ENCODE measurements at regions of chr10 and their contacts with region 1.

Region 1: DNA sequence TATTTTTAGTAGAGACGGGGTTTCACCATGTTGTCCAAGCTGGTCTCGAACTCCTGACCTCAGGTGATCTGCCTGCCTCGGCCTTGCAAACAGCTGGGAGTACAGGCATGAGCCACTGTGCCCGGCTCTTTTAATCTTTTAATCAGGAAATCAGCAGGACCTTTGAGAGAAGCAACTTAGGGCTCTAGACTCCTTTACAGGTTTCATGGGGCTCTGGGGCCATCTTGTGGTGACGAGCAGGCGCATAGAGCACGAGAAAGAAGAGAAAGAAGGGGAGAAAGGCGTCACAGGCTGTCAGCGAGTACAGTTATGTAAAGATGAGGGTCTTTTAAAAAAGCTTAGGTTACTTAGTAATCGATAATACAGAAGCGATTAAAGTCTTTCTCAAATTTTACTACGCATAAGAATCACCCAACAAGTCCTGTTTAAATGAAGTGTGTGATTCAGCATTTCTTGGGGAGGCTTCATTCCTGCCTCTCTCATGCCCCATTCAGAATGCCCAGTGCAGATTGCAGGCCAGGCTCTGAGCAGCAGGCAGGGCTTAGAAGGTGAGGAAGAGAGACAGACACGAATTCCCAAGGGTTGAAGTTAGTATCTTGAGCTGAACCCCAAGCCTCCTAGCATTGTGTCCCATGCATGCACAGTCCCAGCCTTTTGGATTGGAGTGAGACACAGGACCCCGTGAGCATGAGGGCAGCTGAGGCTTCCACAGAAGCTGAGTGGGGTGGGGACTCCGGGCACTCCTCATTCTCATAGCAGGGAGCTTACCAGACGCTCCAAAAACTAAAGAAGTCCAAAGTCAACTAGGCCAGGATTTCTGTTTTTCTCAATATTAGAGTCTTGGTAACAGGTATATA is 23.6 kb upstream of the PFKP start:
- DNase-seq: peak; percentile 72
- H3K4me3 ChIP-seq: no peak overlapping the region
- H3K27ac ChIP-seq: no peak overlapping the region
- H3K4me1 ChIP-seq: no peaks in the 10 kb centered on the region
- H3K27me3 ChIP-seq: no peaks in the 10 kb centered on the region
- CTCF ChIP-seq: peak; percentile 63

Region 2: DNA sequence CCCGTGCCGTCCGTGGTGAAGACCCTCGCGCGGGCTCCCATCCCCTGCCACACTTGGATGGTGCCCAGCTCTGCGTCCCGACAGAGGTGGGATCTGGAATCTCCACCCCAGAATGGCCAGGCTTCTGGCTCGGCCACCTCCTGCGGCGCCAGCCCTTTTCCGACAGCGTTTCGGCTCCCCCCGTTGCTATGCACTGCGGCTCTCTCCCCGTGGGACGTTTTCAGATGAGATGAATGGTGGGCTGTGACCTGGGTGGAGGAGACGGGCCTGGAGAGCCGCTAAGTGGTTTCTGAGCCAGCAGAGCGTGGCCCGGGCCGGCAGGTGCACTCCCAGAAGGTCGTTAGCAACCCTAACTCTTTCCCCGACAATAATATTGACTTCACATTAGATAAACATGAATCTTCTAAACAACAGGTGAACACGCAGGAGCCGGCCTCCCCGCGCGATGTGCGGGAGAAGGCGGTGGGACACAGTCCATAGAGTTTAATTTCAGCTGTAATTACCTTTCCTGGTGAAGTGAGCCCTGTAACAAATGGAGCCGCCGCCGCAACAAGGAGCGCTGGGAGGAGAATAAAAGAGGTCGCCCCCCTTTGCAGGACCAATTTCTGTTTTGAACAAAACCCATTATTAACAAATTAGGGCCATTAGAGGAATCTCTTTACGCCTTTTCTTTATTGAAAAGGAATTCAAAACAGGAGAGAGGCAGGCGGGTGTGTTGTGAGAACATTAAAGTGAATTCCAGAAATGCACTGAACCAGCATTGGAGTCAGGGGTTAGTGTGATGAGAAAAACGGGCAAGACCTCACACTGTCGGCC is 270.7 kb before region 1 on chr10:
- intact Hi-C with region 1: no loop called
- DNase-seq: no peak
- H3K4me3 ChIP-seq: no peak overlapping the region
- H3K27ac ChIP-seq: no peak overlapping the region
- H3K4me1 ChIP-seq: no peaks in the 10 kb centered on the region
- H3K27me3 ChIP-seq: no peaks in the 10 kb centered on the region
- CTCF ChIP-seq: no peak

Region 3: DNA sequence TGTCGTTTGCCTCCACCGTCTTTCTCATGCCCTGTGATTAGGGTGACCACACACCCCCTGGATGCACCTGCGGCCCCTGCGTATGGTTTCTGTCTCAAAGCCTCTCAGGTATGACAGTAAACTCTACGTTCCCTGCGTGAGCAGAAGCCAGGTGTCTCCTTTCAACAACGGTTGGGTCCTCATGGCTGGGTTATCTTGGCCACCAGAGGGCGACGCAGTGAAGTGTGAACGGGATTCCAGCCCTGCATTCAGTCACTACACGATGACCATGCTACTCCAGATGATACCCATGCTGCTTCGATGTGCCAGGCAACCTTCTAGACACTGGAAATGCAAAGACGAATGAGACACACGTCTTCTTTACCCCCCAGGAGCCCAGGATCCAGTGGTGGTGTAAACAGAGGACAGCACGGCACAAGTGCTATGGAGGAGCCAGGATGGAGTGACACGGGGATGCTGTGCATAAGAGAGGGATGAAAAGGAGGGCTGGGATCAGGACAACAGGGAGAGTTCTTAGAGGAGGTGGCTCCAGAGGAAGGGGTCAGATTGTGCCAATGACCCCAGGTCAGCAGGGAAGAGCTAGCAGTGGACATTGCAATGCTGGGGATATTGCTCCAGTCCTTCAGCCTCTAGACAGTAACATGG is 204.5 kb before region 1 on chr10:
- intact Hi-C with region 1: loop called (anchors 5 kb)
- DNase-seq: peak; percentile 44
- H3K4me3 ChIP-seq: no peak overlapping the region
- H3K27ac ChIP-seq: no peak overlapping the region
- H3K4me1 ChIP-seq: no peaks in the 10 kb centered on the region
- H3K27me3 ChIP-seq: no peaks in the 10 kb centered on the region
- CTCF ChIP-seq: peak; percentile 50

Region 4: DNA sequence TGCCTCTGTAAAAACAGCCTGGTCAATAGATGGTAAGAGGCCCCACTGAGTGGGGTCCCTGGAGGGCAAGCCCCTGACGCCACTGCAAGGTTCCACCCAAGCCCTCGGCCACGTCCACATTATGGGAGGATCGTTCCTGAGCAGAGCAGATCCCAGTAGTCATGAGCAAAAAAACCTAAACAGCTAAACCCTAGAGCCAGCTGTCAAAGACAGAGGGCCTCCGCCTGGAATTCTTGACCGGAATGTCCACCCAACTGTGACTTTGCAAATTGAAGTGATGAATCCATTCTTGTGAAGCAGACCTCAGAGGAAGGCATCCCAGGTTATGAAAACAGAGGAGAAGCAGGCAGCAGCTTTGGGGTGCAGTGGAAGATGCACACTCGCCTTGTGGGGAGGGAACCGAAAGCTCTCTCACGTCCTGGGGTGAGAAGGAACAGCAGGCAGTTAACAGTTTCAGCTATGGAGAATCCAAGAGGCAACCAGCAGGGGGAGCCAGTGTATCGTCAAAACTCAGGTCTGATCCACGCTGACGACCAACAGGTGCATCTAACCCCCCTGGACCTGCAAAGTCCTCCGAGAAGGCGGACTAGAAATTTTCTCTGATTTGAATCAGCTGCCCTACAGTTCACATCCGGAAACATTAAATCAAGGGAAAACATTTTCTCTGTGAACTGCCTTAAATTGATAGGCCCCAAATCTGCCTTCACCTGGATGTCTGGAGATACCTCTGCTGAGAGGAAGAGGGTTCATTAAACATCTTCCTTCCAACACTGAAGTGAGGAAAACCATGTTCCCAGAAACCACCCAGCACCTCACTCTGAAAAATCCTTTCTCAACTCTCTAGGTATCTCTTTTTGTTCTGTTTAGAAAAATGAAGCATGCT is 115.5 kb before region 1 on chr10:
- intact Hi-C with region 1: loop called (anchors 2 kb)
- DNase-seq: peak; percentile 80
- H3K4me3 ChIP-seq: no peak overlapping the region
- H3K27ac ChIP-seq: no peak overlapping the region
- H3K4me1 ChIP-seq: no peaks in the 10 kb centered on the region
- H3K27me3 ChIP-seq: no peaks in the 10 kb centered on the region
- CTCF ChIP-seq: peak; percentile 78

Region 5: DNA sequence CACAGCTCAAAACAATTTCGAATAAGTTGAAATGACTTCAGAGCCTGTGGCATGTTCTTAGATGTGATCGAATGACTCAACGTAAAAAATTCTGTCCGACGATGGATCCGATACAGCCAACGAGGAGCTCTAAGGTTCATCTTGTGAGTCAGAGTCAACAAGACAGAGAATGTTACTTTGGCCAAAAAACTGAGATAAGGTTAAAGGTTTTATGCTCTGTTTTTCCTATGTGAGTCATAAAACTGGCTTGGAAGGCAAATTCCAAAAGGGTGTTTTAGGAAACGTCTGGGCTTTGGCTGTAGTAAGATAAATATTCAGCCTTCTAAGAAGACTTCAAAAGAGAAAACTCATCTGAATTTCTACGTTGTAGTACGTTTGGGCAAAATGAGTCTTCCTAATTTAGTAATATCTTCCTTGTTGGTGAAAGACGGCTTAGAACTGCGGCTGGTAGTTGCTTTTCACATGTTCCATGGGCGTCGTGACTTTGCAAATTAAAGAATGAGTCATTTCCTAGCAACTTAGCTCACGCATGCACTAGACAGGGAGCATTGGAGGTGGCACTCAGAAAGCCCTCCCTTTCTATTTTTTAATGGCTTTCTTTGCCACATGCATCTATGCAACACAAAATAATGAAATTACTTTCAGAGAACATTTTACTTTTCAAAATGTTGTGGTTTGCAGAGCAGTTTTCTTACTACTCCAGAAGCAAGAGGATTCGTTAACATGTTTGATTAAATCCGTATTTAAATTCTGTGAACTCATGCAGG is 51.8 kb after region 1 on chr10:
- intact Hi-C with region 1: no loop called
- DNase-seq: peak; percentile 50
- H3K4me3 ChIP-seq: no peak overlapping the region
- H3K27ac ChIP-seq: peak overlapping the region; percentile 42
- H3K4me1 ChIP-seq: peaks cover 14% of the 10 kb centered on the region
- H3K27me3 ChIP-seq: no peaks in the 10 kb centered on the region
- CTCF ChIP-seq: no peak